Endothelial cell of umbilical vein (primary cell): ENCODE measurements at regions of chr15 and their contacts with region 1.

Region 1: DNA sequence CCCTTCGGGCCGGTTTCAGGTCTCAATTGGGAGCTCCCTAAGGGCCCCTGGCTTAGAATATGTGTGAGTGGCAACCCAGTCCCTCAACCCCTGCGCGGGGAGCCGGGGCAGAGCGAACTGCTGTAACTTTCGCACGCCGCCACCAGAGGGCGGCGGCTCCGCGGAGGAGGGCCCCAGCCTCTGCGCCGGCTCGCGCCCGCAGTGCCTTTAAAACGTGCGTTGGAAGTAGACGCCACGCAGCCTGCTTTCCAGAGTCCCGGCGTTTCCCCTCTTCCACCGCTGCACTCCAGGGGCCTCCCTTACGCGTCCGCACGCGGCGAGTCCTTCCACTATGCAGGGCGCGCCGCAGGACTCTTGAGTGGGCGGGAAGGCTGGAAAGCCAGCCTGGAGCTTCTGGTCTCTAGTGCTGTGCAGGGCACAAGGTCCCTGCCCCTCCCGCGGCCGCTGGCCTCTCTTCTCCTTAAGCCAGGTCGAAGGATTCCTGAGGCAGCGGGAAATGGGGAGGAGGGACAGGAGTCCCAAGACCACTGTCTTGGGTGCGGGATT is 23.7 kb upstream of the RNU6-1 start:
- DNase-seq: peak; percentile 65
- H3K4me3 ChIP-seq: peak overlapping the region in 2 of 3 experiments; percentile 8 to 35
- H3K27ac ChIP-seq: no peak overlapping the region
- H3K4me1 ChIP-seq: no peaks in the 10 kb centered on the region
- H3K27me3 ChIP-seq: peaks cover 9 to 13% of the 10 kb centered on the region in 2 experiments
- CTCF ChIP-seq: peak; percentile 87 to 97
- POLR2A ChIP-seq: no peak

Region 2: DNA sequence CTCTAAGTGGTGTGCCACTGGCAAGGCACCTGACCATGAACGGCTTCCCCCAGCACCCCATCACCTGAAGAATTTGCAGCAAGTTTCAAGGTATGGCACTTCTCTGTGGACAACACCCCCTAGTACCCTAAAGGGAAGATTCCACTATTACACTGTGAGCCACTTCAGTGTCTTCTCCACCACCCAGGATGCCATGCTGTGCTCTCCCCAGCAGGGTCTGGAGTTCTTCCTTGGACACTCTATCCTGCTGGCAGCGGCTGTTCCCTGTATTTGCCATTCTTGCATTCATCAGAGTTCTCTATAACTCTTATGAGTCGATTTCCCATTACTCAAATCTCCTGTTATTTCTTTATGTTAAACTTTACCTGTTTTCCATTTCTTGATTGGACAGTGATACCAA is 10.3 kb after region 1 on chr15:
- CTCF ChIA-PET with region 1: interaction called, 16 read pairs
- POLR2A ChIA-PET with region 1: no interaction called
- dilution Hi-C with region 1: no loop called
- intact Hi-C with region 1: no loop called
- DNase-seq: no peak
- H3K4me3 ChIP-seq: no peak overlapping the region
- H3K27ac ChIP-seq: no peak overlapping the region
- H3K4me1 ChIP-seq: no peaks in the 10 kb centered on the region
- H3K27me3 ChIP-seq: peaks cover 10 to 20% of the 10 kb centered on the region in 2 experiments
- CTCF ChIP-seq: no peak
- POLR2A ChIP-seq: no peak

Region 3: GRCh38 chr15:67945951-67946700 is 82.6 kb after region 1 on chr15:
- CTCF ChIA-PET with region 1: no interaction called
- POLR2A ChIA-PET with region 1: no interaction called
- dilution Hi-C with region 1: no loop called
- intact Hi-C with region 1: no loop called
- DNase-seq: no peak
- H3K4me3 ChIP-seq: no peak overlapping the region
- H3K27ac ChIP-seq: no peak overlapping the region
- H3K4me1 ChIP-seq: no peaks in the 10 kb centered on the region
- H3K27me3 ChIP-seq: no peaks in the 10 kb centered on the region
- CTCF ChIP-seq: no peak
- POLR2A ChIP-seq: no peak

Region 4: GRCh38 chr15:68053701-68054627 is 190.4 kb after region 1 on chr15 and contains the start of gene PIAS1:
- CTCF ChIA-PET with region 1: interaction called, 3 read pairs
- POLR2A ChIA-PET with region 1: no interaction called
- dilution Hi-C with region 1: no loop called
- intact Hi-C with region 1: loop called (anchors 5 kb)
- DNase-seq: peak; percentile 95
- H3K4me3 ChIP-seq: peak within 1 kb of the TSS; percentile 88 to 97 (median 91)
- H3K27ac ChIP-seq: peak within 1 kb of the TSS; percentile 39
- H3K4me1 ChIP-seq: peaks cover 15% of the 10 kb centered on the region
- H3K27me3 ChIP-seq: peaks cover 1 to 7% of the 10 kb centered on the region in 2 experiments
- CTCF ChIP-seq: no peak
- POLR2A ChIP-seq: peak; percentile 82
- total RNA-seq, gene PIAS1: 24.2 and 32.3 TPM in 2 replicates

Region 5: GRCh38 chr15:68210821-68211655 is 347.5 kb after region 1 on chr15:
- CTCF ChIA-PET with region 1: interaction called, 14 read pairs
- POLR2A ChIA-PET with region 1: no interaction called
- dilution Hi-C with region 1: no loop called
- intact Hi-C with region 1: loop called (anchors 1 kb)
- DNase-seq: peak; percentile 53
- H3K4me3 ChIP-seq: no peak overlapping the region
- H3K27ac ChIP-seq: no peak overlapping the region
- H3K4me1 ChIP-seq: peaks cover 2% of the 10 kb centered on the region
- H3K27me3 ChIP-seq: no peaks in the 10 kb centered on the region
- CTCF ChIP-seq: peak; percentile 70 to 98
- POLR2A ChIP-seq: no peak

Region 6: GRCh38 chr15:68229386-68230156 is 366.1 kb after region 1 on chr15 and contains the start of gene CLN6:
- CTCF ChIA-PET with region 1: no interaction called
- POLR2A ChIA-PET with region 1: no interaction called
- dilution Hi-C with region 1: no loop called
- intact Hi-C with region 1: loop called (anchors 5 kb)
- DNase-seq: peak; percentile 80
- H3K4me3 ChIP-seq: peak within 1 kb of the TSS; percentile 65 to 85 (median 77)
- H3K27ac ChIP-seq: peak within 1 kb of the TSS; percentile 71
- H3K4me1 ChIP-seq: peaks cover 15% of the 10 kb centered on the region
- H3K27me3 ChIP-seq: no peaks in the 10 kb centered on the region
- CTCF ChIP-seq: no peak
- POLR2A ChIP-seq: peak; percentile 67
- total RNA-seq, gene CLN6: 48.0 and 53.9 TPM in 2 replicates